AG04449 (cell line): ENCODE measurements at regions of chr11 and their contacts with region 1.

Region 1: DNA sequence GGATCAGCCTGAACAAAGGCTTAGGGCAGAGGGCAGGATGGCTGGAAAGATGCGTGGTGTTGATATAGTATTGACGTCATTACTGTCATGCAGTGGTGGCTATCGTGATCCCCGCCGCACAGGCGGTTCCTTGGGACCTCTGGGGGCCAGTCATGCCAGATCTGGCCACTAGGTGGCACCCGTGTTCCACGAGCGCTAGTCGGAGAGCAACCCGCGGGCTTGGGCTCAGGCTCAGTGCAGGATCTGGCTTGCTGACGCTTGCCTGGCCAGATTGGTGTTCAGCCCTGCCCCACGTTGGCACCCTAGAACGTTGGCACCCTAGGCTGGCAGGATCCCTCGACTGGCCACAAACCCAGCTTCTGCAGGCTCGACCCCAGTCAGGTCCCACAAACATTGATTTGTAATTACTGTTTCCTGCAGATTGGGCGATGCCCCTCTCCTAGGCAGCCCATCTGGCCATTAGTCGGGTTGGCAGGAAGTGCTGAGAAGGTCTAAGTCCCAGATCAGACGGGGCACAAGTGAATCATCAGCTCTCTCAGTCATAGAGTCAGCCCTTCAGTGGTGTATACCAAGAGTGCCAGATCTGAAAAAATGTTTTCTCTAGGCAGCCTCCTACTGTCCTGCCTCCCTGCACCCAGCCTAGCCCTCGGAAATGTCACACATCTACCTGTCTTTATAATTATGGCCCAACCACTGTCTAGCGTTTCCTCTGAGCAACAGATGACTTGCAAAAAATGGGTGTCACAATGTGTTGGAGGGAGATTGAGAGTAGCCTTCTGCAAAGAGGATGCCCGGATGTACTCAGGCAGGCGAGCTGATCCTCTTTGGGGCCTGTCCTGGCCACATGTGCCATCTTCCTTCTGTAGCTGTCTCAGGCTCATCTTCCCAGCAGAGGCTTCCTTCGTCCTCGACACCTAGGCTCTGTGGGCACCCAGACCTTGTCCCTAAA is 315.3 kb downstream of the TMEM135 start:
- DNase-seq: peak; percentile 17
- H3K4me3 ChIP-seq: peak overlapping the region; percentile 31
- CTCF ChIP-seq: peak; percentile 98

Region 2: GRCh38 chr11:87722756-87723565 is 369.9 kb after region 1 on chr11:
- CTCF ChIA-PET with region 1: interaction called, 14 read pairs
- POLR2A ChIA-PET with region 1: no interaction called
- DNase-seq: no peak
- H3K4me3 ChIP-seq: no peak overlapping the region
- CTCF ChIP-seq: peak; percentile 69